ENCODE measurements at regions of chr9 and their contacts with region 1.

Region 1: DNA sequence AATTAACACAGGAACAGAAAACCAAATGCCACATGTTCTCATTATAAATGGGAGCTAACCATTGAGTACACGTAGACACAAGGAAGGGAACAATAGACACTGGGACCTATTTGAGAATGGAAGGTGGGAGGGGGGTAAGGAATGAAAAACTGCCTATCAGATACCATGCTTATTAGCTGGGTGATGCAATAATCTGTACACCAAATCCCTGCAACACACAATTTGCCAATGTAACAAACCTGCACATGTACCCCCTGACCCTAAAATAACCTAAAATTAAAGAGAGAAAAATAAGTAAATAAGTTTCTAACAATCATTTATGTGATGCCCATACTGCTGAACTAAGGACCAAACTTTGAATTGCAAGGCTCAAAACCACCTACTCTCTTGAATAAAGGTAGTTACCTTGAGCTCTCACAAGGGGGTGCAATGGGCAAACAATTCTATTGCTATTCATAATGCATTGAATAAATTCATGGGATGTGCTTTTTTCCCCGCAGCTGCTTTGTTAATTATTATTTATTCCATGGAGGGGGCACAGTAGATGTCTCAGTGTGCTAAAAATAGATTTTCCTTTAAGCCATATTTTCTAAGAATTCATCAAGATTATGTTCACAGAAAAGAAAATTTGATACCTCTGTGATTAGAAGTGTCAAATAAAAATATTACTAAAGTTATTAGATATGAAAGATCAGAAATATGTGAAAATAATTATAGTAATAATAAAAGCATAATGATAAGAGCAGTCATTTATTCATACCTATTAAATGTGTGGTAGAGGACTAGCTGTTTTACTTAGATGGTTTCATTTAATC is 76.2 kb upstream of the PTPN3 start:
- DNase-seq: peak; percentile 42
- H3K4me3 ChIP-seq: no peak overlapping the region
- H3K27ac ChIP-seq: no peak overlapping the region
- H3K4me1 ChIP-seq: no peaks in the 10 kb centered on the region
- H3K27me3 ChIP-seq: no peaks in the 10 kb centered on the region
- CTCF ChIP-seq: peak; percentile 84
- EP300 ChIP-seq: no peak
- RAD21 ChIP-seq: peak; percentile 83

Region 2: GRCh38 chr9:109627041-109627440 is 52.8 kb after region 1 on chr9:
- CTCF ChIA-PET with region 1: no interaction called
- POLR2A ChIA-PET with region 1: no interaction called
- DNase-seq: no peak
- H3K4me3 ChIP-seq: no peak overlapping the region
- H3K27ac ChIP-seq: no peak overlapping the region
- H3K4me1 ChIP-seq: no peaks in the 10 kb centered on the region
- H3K27me3 ChIP-seq: peaks cover 24% of the 10 kb centered on the region; the same call in 1 of the 2 replicates
- CTCF ChIP-seq: no peak
- EP300 ChIP-seq: no peak
- RAD21 ChIP-seq: no peak

Region 3: DNA sequence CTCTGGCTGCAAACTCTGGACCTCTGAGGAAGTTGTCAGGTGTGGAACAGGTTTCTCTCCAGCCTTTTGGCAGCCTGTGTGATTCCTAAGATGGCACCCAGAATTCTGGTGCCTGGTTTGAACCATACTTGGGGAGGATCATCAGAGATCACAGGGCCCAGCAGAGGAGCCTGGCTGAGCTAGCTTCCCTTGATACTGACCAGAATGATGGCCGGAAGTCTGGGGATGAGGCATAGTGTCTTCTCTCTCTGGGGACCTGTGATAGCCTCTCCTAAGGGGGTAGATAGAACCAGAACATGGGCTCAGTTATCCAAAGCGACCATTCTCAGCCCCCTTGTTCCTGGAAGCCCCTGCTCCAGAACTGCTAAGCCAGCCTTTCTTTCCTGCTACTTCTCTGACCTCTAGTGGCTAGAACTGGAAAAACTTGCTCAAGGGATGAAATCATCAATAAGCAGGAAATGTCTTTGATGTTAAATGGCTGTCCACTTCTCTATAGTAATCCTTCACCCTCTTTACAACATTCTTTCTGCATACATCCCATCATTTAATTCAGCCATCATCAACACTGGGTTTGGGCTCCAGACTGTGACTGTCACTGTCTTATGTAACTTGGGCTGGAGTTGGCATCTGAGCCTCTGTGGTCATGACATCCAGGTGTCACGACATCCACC is 578.6 kb after region 1 on chr9:
- CTCF ChIA-PET with region 1: interaction called, 16 read pairs
- POLR2A ChIA-PET with region 1: no interaction called
- DNase-seq: peak; percentile 62
- H3K4me3 ChIP-seq: no peak overlapping the region
- H3K27ac ChIP-seq: peak overlapping the region in 1 of 2 experiments; percentile 9; a peak in 1 of 4 replicates
- H3K4me1 ChIP-seq: peaks cover 0 to 13% of the 10 kb centered on the region in 2 experiments; a peak in 1 of 4 replicates
- H3K27me3 ChIP-seq: no peaks in the 10 kb centered on the region
- CTCF ChIP-seq: peak; percentile 83
- EP300 ChIP-seq: no peak
- RAD21 ChIP-seq: peak; percentile 96

Measured in SK-N-SH (cell line).